A549 (cell line): ENCODE measurements at regions of chr16 and their contacts with region 1.

Region 1: GRCh38 chr16:57519796-57520360 is 16.5 kb downstream of the CCDC102A start:
- DNase-seq: peak; percentile 68 to 91
- ATAC-seq: peak; percentile 85 to 96
- H3K4me3 ChIP-seq: no peak overlapping the region
- H3K27ac ChIP-seq: peak overlapping the region; percentile 29 to 57; a peak in 3 of 6 replicates
- H3K4me1 ChIP-seq: no peaks in the 10 kb centered on the region
- CTCF ChIP-seq: peak; percentile 98
- EP300 ChIP-seq: no peak
- POLR2A ChIP-seq: no peak
- RAD21 ChIP-seq: peak; percentile 97 to 98

Region 2: DNA sequence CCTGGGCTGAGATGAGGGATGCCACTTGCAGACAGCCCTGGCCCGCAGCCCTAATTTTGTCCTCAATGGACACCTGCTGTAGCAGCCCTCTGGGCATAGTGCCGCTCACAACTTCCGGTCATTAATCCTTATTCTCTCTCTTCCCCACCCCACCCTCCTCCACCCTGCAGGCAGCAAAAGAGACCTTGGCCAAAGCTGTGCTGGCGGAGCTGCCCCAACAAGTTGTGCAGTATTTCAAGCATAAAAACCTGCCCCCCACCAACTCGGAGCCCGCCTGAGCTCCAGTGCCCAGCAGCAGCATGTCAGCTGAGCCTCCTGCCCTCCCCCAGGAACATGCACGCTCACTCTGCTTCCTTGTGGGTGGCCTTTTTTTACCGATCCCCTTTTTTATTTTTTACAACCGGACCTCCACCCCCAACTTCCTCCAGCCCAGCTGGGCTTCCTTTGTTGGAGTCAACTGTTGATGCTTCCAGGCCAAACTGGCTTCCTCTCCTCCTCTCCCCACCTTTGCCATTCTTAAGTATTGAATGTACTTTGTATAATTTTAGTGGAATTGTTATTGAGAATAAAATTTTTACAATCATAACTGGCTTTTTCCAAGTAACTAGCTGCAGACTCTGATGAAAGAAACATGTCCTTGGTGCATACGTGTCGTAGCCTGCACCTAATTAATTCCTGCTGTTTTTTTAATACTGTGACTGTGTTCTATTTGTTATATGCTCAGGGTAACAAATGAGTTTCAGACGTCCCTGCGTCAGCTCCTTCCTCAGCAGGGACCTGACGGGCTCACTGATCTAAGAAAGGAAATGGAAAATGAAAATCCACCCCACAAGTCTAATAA is 372.3 kb before region 1 on chr16:
- CTCF ChIA-PET with region 1: no interaction called
- POLR2A ChIA-PET with region 1: no interaction called
- DNase-seq: no peak
- ATAC-seq: no peak
- H3K4me3 ChIP-seq: no peak overlapping the region
- H3K27ac ChIP-seq: no peak overlapping the region
- H3K4me1 ChIP-seq: no peaks in the 10 kb centered on the region
- CTCF ChIP-seq: no peak
- EP300 ChIP-seq: no peak
- POLR2A ChIP-seq: no peak
- RAD21 ChIP-seq: no peak

Region 3: GRCh38 chr16:57394444-57394843 is 125.4 kb before region 1 on chr16:
- CTCF ChIA-PET with region 1: no interaction called
- POLR2A ChIA-PET with region 1: no interaction called
- DNase-seq: no peak
- ATAC-seq: no peak
- H3K4me3 ChIP-seq: no peak overlapping the region
- H3K27ac ChIP-seq: no peak overlapping the region
- H3K4me1 ChIP-seq: no peaks in the 10 kb centered on the region
- CTCF ChIP-seq: no peak
- EP300 ChIP-seq: no peak
- POLR2A ChIP-seq: no peak
- RAD21 ChIP-seq: no peak

Region 4: DNA sequence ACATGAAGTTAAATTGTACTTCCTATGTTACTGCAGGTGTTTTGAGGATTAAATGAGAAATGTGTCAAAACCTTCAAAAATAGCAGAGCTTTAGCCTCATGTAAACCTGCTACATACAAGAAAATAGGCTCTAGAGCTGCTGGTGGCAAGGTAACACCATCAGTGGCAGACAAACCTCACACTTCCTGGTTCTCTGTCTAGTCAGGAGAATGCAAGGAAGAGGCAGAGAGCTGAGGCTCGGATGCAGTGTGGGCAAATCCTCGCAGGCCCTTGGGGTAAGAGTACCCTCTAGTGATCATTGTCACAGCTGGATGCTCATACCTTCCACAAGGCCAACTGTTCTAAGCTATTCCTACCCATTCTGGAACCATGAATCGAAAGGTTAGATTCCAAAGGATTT is 86.9 kb before region 1 on chr16:
- CTCF ChIA-PET with region 1: interaction called, 11 read pairs
- POLR2A ChIA-PET with region 1: no interaction called
- DNase-seq: no peak
- ATAC-seq: no peak
- H3K4me3 ChIP-seq: no peak overlapping the region
- H3K27ac ChIP-seq: no peak overlapping the region
- H3K4me1 ChIP-seq: no peaks in the 10 kb centered on the region
- CTCF ChIP-seq: no peak
- EP300 ChIP-seq: no peak
- POLR2A ChIP-seq: no peak
- RAD21 ChIP-seq: no peak

Region 5: DNA sequence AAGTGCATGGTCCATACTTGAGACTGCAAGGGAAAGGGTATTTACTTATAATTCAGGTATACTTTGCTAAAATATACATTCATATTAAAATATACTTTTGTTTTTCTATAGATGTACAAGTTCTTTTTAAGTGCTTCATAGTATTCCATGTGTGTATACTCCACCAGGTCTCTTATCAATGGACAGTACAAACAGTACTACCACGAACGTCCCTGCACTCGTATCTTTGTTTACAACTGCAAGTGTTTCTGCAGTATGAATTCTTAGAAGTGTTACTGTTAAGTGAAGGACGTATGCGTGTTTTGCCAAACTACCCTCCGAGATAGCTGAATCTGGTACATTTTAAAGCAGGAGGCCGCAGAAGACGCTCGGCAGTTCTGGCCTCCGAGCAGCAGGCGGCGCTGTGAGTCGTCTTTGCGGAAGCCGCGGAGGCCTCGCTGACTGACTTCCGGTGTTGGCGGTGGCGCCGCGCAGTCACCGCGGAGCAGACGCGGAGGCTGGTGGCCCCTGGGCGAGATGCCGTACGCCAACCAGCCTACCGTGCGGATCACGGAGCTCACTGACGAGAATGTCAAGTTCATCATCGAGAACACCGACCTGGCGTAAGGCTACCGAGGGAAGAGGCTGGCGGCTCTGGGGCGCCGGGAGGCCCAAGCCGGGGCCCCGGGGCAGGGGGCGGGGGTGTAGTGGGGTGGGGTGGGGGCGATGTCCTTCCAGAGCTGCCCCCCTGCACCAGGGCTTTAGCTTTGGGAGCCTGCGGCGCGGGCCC is 57.5 kb before region 1 on chr16 and contains the start of gene POLR2C:
- CTCF ChIA-PET with region 1: interaction called, 54 read pairs
- POLR2A ChIA-PET with region 1: interaction called, 7 read pairs
- DNase-seq: peak; percentile 85 to 91
- ATAC-seq: peak; percentile 93 to 97
- H3K4me3 ChIP-seq: peak within 1 kb of the TSS; percentile 82
- H3K27ac ChIP-seq: peak within 1 kb of the TSS; percentile 93 to 97
- H3K4me1 ChIP-seq: peaks cover 37% of the 10 kb centered on the region
- CTCF ChIP-seq: peak; percentile 82
- EP300 ChIP-seq: no peak
- POLR2A ChIP-seq: peak; percentile 99
- RAD21 ChIP-seq: peak; percentile 39 to 56; a peak in 4 of 5 replicates
- polyA plus RNA-seq, gene POLR2C: 229 and 259 TPM in 2 replicates

Region 6: DNA sequence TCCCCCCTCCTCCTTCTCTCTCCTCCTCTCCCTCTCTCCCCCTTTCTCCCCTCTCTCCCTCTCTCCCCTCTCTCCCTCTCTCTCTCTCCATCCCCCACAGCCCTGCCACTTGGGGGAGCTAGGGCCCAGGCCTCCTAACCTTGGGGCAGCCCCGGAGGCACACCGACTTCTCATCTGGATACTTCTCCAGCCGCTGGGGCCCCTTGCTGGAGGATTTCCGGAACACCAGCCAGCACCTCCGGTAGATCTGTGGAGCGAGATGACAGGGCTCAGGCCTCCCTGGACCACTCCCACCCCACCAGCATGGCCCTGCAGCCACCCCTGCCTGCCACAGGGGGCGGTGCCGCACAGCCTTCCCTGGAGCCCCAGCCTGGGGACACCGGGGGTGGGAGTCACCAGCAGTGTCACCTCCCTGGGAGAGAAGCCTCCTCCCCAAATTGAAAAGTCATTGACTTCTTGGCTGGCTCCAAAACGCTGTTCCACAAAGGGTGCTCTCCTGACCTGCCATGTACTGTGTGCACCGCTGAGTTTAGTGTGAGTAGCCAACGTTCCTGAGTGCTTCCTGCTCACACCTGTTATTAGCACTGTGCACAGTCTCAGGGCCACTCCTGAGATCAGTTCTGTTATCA is 44.1 kb before region 1 on chr16:
- CTCF ChIA-PET with region 1: interaction called, 44 read pairs
- POLR2A ChIA-PET with region 1: interaction called, 4 read pairs
- DNase-seq: peak; percentile 77 to 82
- ATAC-seq: peak; percentile 44 to 69
- H3K4me3 ChIP-seq: peak overlapping the region; percentile 21; the same call in 1 of the 3 replicates
- H3K27ac ChIP-seq: peak overlapping the region; percentile 96 to 98
- H3K4me1 ChIP-seq: peaks cover 97% of the 10 kb centered on the region
- CTCF ChIP-seq: peak; percentile 58
- EP300 ChIP-seq: no peak
- POLR2A ChIP-seq: no peak
- RAD21 ChIP-seq: peak in 1 of 2 experiments; percentile 59; a peak in 4 of 5 replicates

Region 7: DNA sequence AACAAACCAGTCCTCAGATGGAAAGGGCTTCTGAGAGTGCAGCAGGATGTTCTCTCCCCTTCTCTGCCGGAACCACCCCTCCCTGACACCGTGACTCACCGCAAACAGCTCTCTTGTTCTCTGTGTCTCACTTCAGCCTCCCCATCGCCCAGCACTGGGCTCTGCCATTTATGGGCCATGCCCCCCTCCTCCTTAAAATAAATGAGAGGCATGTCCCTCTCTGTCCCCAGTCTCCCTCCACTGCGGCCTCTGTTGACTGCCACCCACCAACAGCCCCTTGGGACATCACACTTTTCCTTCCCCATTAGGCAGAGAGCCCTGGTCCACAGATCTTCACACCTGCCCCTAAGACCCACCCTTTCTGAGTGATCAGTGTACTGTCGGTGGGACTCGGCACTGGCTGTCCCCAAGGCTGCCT is 10.2 kb after region 1 on chr16:
- CTCF ChIA-PET with region 1: interaction called, 194 read pairs
- POLR2A ChIA-PET with region 1: no interaction called
- DNase-seq: no peak
- ATAC-seq: peak; percentile 39 to 71; a peak in 4 of 6 replicates
- H3K4me3 ChIP-seq: no peak overlapping the region
- H3K27ac ChIP-seq: peak overlapping the region; percentile 65 to 79
- H3K4me1 ChIP-seq: peaks cover 55% of the 10 kb centered on the region
- CTCF ChIP-seq: no peak
- EP300 ChIP-seq: no peak
- POLR2A ChIP-seq: no peak
- RAD21 ChIP-seq: no peak